ENCODE measurements at regions of chr9 and their contacts with region 1.

Region 1: DNA sequence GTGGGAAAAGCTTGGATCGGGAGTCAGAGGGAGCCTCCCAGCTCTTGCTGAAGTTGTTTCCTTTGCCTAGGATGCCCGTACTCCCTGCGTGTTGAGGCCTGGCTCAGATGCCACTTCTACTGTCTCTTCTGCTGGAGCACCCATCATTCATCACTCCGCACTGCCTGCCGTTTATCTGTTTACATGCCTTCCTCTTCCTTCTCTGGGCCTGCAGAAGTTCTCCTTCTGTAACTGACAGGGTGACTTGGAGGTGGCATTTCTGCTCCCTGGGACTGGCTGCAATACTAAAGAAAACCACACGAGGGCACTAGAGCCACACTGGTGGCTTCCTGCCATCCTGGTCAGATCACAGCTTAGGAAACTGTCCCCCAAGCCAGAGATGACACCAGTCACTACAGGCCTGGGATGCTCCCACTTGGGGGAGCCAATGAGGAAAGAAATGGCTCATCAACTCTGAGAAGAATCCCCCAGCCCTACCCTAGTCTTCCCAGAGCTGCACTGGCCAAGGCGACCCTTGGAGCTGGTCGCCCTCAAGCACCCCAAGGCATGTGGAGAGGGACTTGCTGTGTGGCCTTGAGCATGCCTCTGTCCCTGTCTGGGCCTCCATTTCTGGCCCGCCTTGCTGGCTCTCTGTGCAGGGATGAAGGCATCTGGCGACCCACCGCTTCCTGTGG is 9.7 kb upstream of the SLC25A51 start:
- DNase-seq: peak; percentile 77 to 95 (median 86)
- H3K4me3 ChIP-seq: no peak overlapping the region
- H3K27ac ChIP-seq: no peak overlapping the region
- H3K4me1 ChIP-seq: no peaks in the 10 kb centered on the region
- H3K27me3 ChIP-seq: no peaks in the 10 kb centered on the region
- CTCF ChIP-seq: peak; percentile 98 to 99 (median 99)
- POLR2A ChIP-seq: no peak

Region 2: GRCh38 chr9:38068866-38069629 is 155.4 kb after region 1 on chr9 and contains the start of gene SHB:
- intact Hi-C with region 1: loop called in 1 of 2 experiments (anchors 5 kb)
- DNase-seq: peak; percentile 71 to 84 (median 82)
- H3K4me3 ChIP-seq: peak within 1 kb of the TSS; percentile 44 to 83 (median 75)
- H3K27ac ChIP-seq: peak within 1 kb of the TSS in 4 of 5 donors; percentile 74 to 91 (median 86)
- H3K4me1 ChIP-seq: peaks cover under 1 to 38% of the 10 kb centered on the region in 2 donors
- H3K27me3 ChIP-seq: no peaks in the 10 kb centered on the region
- CTCF ChIP-seq: peak in 1 of 6 experiments; percentile 32
- POLR2A ChIP-seq: peak; percentile 77 to 86
- total RNA-seq, gene SHB: 3.2 to 21.2 (median 13.5) TPM

Region 3: DNA sequence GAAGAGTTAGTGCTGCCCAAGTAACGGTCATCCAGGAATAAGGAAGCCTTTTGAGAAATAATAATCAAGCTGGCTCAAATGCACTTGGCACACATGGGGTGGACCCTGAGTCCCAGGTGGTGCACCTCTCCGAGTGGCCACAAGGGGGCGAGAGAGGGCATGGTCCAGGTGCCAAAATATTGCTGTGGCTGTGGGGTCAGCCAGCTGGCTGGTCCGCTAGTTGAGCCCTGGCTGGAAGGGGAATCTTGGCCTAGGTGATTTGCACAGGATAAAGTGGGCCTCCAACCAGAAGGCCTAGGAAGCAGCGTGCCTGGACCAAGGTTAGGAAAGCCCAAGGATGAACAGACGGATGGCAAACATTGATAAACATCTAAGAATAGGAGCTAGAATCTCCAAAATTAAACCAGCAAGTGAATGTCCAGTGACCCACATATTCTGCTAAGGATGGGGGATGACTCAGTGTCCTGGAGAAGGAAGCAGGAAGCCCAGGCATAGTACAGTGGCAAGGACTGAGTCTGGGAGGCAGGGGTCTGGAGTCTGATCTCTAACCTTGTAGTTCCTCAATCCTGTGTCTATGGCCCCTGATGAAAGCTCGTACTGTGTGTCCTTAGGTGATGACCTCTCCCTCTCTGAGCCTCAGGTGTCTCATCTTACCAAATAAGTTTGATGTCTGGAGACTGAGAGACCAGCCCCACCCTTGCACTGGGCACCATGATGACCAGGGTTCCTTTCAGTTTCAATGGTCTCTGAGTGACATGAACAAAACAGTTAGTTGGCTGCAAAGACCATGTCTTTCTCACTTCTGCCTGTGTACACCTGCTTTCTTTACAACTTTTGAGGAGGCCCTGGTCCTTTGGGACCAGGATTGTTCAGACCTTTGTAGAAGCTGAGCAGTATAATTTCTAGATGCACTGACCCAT is 174.6 kb after region 1 on chr9:
- intact Hi-C with region 1: loop called in 1 of 2 experiments (anchors 5 kb)
- DNase-seq: peak; percentile 66 to 92 (median 75)
- H3K4me3 ChIP-seq: no peak overlapping the region
- H3K27ac ChIP-seq: no peak overlapping the region
- H3K4me1 ChIP-seq: no peaks in the 10 kb centered on the region
- H3K27me3 ChIP-seq: no peaks in the 10 kb centered on the region
- CTCF ChIP-seq: peak; percentile 84 to 99 (median 94)
- POLR2A ChIP-seq: no peak

Region 4: GRCh38 chr9:38160613-38161215 is 247.1 kb after region 1 on chr9:
- intact Hi-C with region 1: loop called (anchors 5 kb)
- DNase-seq: peak; percentile 43 to 79 (median 76)
- H3K4me3 ChIP-seq: no peak overlapping the region
- H3K27ac ChIP-seq: no peak overlapping the region
- H3K4me1 ChIP-seq: no peaks in the 10 kb centered on the region
- H3K27me3 ChIP-seq: no peaks in the 10 kb centered on the region
- CTCF ChIP-seq: peak; percentile 57 to 80 (median 75)
- POLR2A ChIP-seq: no peak

Region 5: DNA sequence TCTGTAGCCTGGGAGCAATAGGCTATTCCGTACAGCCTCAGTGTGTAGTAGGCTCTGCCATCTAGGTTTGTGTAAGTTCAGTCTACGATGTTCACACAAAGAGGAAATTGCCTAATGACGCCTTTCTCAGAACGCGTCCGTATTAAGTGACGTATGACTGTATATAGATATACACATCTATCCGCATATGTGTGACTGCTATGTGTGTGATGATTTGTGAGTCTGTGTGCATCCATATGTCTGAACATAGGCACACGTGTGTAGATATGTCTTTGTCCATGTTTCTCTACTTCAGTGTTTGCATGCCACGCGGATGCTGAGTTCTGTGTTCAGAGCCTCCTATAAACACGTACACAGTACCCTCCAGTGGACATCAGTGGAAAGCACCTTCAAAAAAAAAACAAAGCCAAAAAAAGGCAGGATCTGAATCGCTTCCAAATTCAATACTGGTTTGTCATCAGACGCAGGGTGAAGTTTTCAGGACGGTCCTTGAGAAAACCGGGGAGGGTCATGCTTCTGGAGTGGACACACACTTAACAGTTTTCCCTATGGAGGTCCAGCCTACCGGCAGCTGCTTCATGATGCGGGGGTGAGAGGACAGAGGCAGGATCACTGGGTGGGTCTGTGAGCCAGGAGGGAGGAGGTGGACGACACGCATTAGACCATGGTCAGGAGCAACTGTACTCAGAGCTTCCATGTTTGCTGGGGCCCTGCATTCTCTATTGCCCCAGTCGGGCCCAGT is 449.4 kb after region 1 on chr9:
- intact Hi-C with region 1: loop called (anchors 5 to 10 kb)
- DNase-seq: peak; percentile 39 to 72 (median 66)
- H3K4me3 ChIP-seq: no peak overlapping the region
- H3K27ac ChIP-seq: peak overlapping the region in 1 of 5 donors; percentile 15
- H3K4me1 ChIP-seq: peaks cover 0 to 6% of the 10 kb centered on the region in 2 donors
- H3K27me3 ChIP-seq: no peaks in the 10 kb centered on the region
- CTCF ChIP-seq: peak; percentile 53 to 92 (median 72)
- POLR2A ChIP-seq: no peak

Region 6: GRCh38 chr9:38423973-38424843 is 510.6 kb after region 1 on chr9 and contains the start of gene IGFBPL1:
- intact Hi-C with region 1: no loop called
- DNase-seq: peak in 3 of 7 donors; percentile 9 to 52 (median 18)
- H3K4me3 ChIP-seq: peak within 1 kb of the TSS in 1 of 4 donors; percentile 41
- H3K27ac ChIP-seq: peak within 1 kb of the TSS in 1 of 5 donors; percentile 21
- H3K4me1 ChIP-seq: no peaks in the 10 kb centered on the region
- H3K27me3 ChIP-seq: peaks cover 37% of the 10 kb centered on the region
- CTCF ChIP-seq: no peak
- POLR2A ChIP-seq: no peak
- total RNA-seq, gene IGFBPL1: 0.23 to 5.2 (median 1.9) TPM in 5 of 9 donors, not detected in the others